Gastrocnemius medialis (tissue), 4 donors: ENCODE measurements at regions of chr4 and their contacts with region 1.

Region 1: DNA sequence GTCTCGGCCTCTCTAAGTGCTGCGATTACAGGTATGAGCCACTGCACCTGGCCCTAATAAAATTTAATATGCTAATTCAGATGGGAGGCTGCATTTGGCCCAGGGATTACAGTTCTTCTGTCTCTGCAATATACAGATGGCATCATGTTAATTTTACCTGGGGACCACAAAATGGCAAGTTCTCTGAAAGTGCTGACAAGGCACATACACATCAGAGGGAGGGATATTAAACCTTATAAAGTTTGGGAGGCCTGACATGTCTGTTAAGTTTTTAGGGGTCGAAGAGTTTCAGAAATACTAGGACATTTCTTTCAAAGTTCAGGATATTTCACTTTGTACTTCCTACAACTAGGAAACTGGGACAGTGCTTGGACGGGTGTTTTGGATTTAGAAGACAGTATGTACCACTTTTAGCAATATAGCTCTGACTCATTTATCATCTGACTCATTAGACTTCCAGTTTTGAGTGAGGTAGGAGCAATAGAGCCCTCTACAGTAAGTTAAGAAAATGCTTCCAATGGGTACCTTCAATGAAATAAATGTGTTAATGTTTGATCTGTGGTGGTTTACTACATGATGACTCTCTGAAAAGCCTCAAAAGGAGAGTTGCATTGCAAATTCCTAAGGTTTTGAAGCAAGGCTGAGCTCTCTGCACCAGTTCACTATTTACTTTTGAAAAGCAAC is 981.0 kb upstream of the HS3ST1 start:
- DNase-seq: no peak
- ATAC-seq: no peak
- H3K4me3 ChIP-seq: no peak overlapping the region
- H3K27ac ChIP-seq: no peak overlapping the region
- H3K4me1 ChIP-seq: no peaks in the 10 kb centered on the region
- H3K27me3 ChIP-seq: no peaks in the 10 kb centered on the region
- CTCF ChIP-seq: no peak
- POLR2A ChIP-seq: no peak

Region 2: GRCh38 chr4:10496200-10496599 is 1913.4 kb before region 1 on chr4:
- in situ Hi-C with region 1: no loop called
- intact Hi-C with region 1: loop called (anchors 10 kb)
- DNase-seq: no peak
- ATAC-seq: no peak
- H3K4me3 ChIP-seq: no peak overlapping the region
- H3K27ac ChIP-seq: no peak overlapping the region
- H3K4me1 ChIP-seq: no peaks in the 10 kb centered on the region
- H3K27me3 ChIP-seq: no peaks in the 10 kb centered on the region
- CTCF ChIP-seq: no peak
- POLR2A ChIP-seq: no peak

Region 3: GRCh38 chr4:12084690-12085089 is 325.0 kb before region 1 on chr4:
- in situ Hi-C with region 1: no loop called
- intact Hi-C with region 1: no loop called
- DNase-seq: no peak
- ATAC-seq: no peak
- H3K4me3 ChIP-seq: no peak overlapping the region
- H3K27ac ChIP-seq: no peak overlapping the region
- H3K4me1 ChIP-seq: no peaks in the 10 kb centered on the region
- H3K27me3 ChIP-seq: no peaks in the 10 kb centered on the region
- CTCF ChIP-seq: no peak
- POLR2A ChIP-seq: no peak

Region 4: GRCh38 chr4:12221031-12221430 is 188.6 kb before region 1 on chr4:
- in situ Hi-C with region 1: no loop called
- intact Hi-C with region 1: no loop called
- DNase-seq: no peak
- ATAC-seq: no peak
- H3K4me3 ChIP-seq: no peak overlapping the region
- H3K27ac ChIP-seq: no peak overlapping the region
- H3K4me1 ChIP-seq: no peaks in the 10 kb centered on the region
- H3K27me3 ChIP-seq: no peaks in the 10 kb centered on the region
- CTCF ChIP-seq: no peak
- POLR2A ChIP-seq: no peak

Region 5: DNA sequence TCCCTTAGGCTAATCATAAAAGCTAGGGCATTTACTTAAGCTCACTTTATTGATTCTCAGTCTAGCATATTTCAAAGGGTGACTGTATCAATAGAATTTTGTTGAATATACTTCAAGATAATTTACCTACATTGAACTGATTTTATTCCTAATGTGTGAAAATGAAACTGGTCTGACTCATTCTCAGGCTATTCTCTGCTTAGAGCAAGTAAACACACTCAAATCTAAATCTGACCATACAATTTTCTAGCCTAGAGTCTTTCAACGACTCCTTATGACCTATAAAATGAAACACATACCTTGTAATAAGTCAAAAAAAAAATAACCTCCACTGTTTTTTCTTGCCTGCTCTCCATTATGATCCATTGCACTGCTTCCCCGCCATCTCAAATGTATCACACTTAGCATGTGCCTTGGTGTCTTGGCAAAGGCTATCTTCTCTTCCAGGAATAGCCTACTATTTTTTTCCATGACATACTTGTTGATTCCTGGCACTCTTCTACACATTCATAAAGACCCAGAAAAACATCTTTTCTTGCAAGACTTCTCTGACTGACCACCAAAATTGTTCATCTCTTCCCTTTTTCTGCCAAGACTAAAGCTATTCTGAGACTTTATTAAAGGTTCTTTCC is 15.9 kb before region 1 on chr4:
- in situ Hi-C with region 1: no loop called
- intact Hi-C with region 1: no loop called
- DNase-seq: no peak
- ATAC-seq: no peak
- H3K4me3 ChIP-seq: no peak overlapping the region
- H3K27ac ChIP-seq: no peak overlapping the region
- H3K4me1 ChIP-seq: no peaks in the 10 kb centered on the region
- H3K27me3 ChIP-seq: no peaks in the 10 kb centered on the region
- CTCF ChIP-seq: no peak
- POLR2A ChIP-seq: no peak